WTC11 (cell line): ENCODE measurements at regions of chr4 and their contacts with region 1.

Region 1: DNA sequence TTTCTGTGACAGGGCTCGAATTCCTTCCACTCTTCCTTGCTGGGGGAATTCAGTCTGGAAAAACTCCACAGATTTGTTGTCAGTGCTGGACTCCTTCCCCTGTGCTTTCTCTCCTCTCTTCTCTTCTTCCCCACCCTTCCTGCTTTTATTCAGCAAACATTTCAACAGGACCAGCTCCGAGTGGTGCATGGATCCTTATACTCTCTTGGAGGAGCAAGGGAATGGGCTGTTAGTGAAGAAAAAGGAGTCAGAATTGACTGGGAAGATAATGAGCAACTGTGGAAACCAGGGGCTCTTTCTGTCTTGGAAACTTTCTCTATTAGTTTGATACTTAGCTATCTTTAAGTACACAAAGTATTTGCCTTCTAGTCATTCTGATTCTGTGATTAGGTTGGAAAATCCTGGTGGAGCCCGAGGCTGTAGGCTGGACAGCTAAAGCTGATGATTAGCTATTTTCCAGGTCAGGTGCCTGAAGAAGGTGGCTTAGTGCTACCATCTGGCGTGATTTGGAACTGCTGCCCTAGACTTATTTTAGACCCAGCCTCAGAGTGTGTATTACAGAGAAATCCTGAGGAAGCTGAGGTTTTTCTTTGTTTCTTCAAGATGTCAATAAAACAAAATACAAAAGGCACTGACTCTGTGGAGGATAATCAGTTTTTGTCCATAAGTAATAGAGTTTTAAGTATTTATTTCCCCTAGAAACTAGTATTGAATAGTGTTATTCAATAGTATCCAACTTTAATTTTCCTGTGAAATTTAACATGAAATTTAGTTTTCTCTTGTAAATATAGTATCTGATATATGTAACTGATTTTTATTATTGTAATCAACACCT is 38.4 kb downstream of the NAP1L5 start:
- DNase-seq: peak; percentile 32
- ATAC-seq: peak; percentile 99
- H3K4me3 Mint-ChIP-seq: no peak overlapping the region
- H3K27ac Mint-ChIP-seq: no peak overlapping the region; the same call in 1 of the 2 replicates
- H3K4me1 Mint-ChIP-seq: peaks cover 19% of the 10 kb centered on the region
- H3K27me3 Mint-ChIP-seq: no peaks in the 10 kb centered on the region
- CTCF ChIP-seq: peak; percentile 43; the same call in 1 of the 2 replicates

Region 2: GRCh38 chr4:88204882-88205281 is 454.4 kb before region 1 on chr4:
- CTCF ChIA-PET with region 1: no interaction called
- POLR2A ChIA-PET with region 1: no interaction called
- DNase-seq: no peak
- ATAC-seq: no peak
- H3K4me3 Mint-ChIP-seq: no peak overlapping the region
- H3K27ac Mint-ChIP-seq: no peak overlapping the region
- H3K4me1 Mint-ChIP-seq: peaks cover 33% of the 10 kb centered on the region
- H3K27me3 Mint-ChIP-seq: no peaks in the 10 kb centered on the region
- CTCF ChIP-seq: no peak

Region 3: GRCh38 chr4:88411473-88412096 is 247.7 kb before region 1 on chr4:
- CTCF ChIA-PET with region 1: no interaction called
- POLR2A ChIA-PET with region 1: no interaction called
- DNase-seq: no peak
- ATAC-seq: no peak
- H3K4me3 Mint-ChIP-seq: no peak overlapping the region
- H3K27ac Mint-ChIP-seq: no peak overlapping the region
- H3K4me1 Mint-ChIP-seq: peaks cover 10% of the 10 kb centered on the region
- H3K27me3 Mint-ChIP-seq: no peaks in the 10 kb centered on the region
- CTCF ChIP-seq: no peak

Region 4: GRCh38 chr4:88514557-88515511 is 144.4 kb before region 1 on chr4:
- CTCF ChIA-PET with region 1: interaction called, 10 read pairs
- POLR2A ChIA-PET with region 1: no interaction called
- DNase-seq: no peak
- ATAC-seq: no peak
- H3K4me3 Mint-ChIP-seq: no peak overlapping the region
- H3K27ac Mint-ChIP-seq: no peak overlapping the region
- H3K4me1 Mint-ChIP-seq: no peaks in the 10 kb centered on the region
- H3K27me3 Mint-ChIP-seq: no peaks in the 10 kb centered on the region
- CTCF ChIP-seq: no peak

Region 5: DNA sequence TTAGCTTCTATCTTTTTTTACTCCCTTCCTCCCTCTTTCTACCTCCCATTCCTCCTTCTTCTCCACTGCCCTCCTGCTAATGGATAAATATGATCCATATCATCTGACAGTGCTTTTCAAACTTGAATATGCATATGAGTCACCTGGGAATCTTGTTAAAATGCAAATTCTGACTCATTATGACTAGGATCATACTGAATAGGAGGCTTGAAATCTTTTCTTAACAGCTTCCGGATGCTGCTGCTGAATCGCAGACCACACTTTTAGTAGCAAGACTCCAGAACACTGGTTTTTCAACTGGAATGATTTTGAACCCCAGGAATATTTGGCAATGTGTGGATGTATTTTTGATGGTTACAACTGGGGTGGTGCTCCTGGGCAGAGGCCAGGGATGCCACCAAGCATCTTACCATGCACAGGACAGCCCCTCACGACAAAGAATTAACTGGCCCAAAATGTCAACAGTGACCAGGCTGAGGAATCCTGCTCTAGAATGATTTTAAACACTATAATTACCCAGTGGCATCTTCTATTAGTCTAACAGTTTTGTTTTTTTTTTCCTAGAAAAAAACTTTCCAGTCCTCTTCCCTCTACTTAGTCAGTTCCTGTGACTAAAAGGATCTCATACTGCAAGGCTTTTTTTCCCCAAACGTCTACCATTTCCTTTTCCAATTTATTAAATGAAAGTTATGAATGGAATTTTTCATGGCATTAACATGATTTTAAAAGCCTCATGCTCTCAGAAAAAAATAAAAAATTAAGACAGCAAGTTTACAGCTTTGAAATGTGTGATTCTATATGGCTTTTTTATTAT is 125.1 kb before region 1 on chr4:
- CTCF ChIA-PET with region 1: interaction called, 69 read pairs
- POLR2A ChIA-PET with region 1: interaction called, 5 read pairs
- DNase-seq: no peak
- ATAC-seq: peak; percentile 28
- H3K4me3 Mint-ChIP-seq: peak overlapping the region; percentile 63
- H3K27ac Mint-ChIP-seq: peak overlapping the region; percentile 98
- H3K4me1 Mint-ChIP-seq: peaks cover 51% of the 10 kb centered on the region
- H3K27me3 Mint-ChIP-seq: no peaks in the 10 kb centered on the region
- CTCF ChIP-seq: no peak

Region 6: DNA sequence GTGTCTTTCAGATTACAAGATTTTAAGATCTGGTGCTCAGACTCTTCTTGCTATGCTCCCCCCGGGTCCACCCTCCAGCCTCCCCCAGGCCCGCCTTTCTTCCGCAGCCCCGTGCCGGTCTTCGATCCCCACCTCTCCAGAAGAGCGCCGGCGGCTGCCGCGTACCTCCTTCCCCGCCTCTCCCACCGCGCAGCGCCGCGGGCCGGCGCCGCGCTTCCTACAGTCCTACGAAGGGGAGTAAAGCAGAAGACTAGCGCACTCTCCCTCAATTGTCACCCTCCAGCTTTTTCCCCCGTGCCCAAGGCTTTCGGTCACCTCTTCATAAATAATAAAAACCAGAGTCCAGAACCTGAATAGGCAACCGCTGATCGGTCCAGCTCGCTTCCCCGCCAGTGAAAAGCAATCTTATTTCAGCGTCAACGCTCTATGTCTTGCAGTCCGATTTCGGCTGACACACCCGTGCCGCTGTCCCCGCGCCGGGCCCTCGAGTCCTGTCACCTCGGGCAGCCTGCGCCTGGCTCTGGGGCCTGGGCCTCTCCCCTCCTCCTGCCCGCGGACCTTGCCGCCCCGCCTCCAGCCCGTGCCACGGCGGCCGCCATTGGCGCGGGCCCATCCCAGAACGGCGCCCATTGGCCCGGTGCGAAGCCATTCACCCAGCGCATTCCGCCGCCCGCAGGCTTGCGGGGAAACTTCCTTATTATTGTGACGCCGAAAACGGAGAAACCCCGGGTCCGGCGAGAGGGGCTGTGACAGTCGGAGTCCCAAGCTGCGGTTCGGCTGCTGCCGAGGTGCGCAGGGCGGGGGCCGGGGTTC is 67.3 kb before region 1 on chr4 and contains the start of gene HERC3:
- CTCF ChIA-PET with region 1: interaction called, 13 read pairs
- POLR2A ChIA-PET with region 1: no interaction called
- DNase-seq: peak; percentile 89
- ATAC-seq: peak; percentile 97
- H3K4me3 Mint-ChIP-seq: peak within 1 kb of the TSS; percentile 81
- H3K27ac Mint-ChIP-seq: no peak within 1 kb of the TSS
- H3K4me1 Mint-ChIP-seq: peaks cover 13% of the 10 kb centered on the region
- H3K27me3 Mint-ChIP-seq: peaks cover 67% of the 10 kb centered on the region
- CTCF ChIP-seq: no peak
- total RNA-seq, gene HERC3: 5.2 to 6.3 TPM (median 5.5 TPM) in 3 replicates

Region 7: GRCh38 chr4:88646528-88647280 is 12.6 kb before region 1 on chr4:
- CTCF ChIA-PET with region 1: interaction called, 14 read pairs
- POLR2A ChIA-PET with region 1: no interaction called
- DNase-seq: peak; percentile 25
- ATAC-seq: peak; percentile 97
- H3K4me3 Mint-ChIP-seq: no peak overlapping the region
- H3K27ac Mint-ChIP-seq: peak overlapping the region; percentile 88
- H3K4me1 Mint-ChIP-seq: peaks cover 46% of the 10 kb centered on the region
- H3K27me3 Mint-ChIP-seq: no peaks in the 10 kb centered on the region
- CTCF ChIP-seq: no peak